Right ventricle myocardium inferior (tissue), 1 donor: ENCODE measurements at regions of chr1 and their contacts with region 1.

Region 1: DNA sequence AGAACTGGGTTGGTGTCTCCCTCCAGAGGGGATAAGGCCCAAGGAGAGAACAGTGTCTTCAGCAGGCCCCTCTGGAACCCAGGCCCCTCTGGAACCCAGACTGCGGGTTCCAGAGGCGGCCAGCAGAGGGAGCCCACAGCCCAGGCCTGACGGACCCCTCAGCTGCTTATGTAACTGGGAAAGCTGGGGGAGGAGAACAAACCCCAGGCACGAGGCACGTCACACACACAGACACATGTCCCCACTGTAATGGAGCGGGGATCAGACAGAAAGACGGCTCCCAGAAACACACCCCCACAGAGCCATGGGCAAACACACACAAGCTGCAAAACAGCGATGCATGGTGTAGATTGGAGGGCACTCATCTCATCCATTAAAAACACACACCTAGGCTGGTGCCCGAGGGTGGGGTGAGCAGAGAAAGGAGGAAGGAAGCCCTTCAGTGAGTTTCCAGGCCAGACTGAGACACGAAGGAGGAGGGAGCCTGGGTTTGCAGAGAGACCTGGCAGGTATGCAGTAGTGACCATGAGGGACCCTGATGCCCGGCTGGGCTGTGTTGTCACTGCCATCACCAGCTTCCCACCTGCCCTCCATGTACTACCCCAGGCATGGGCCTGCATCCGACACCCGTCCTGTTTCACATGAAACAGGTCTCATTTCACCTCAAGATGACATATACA is 2.8 kb upstream of the IGSF8 start:
- DNase-seq: peak; percentile 89
- ATAC-seq: peak; percentile 38

Region 2: GRCh38 chr1:160219062-160219929 is 118.1 kb after region 1 on chr1:
- intact Hi-C with region 1: loop called (anchors 2 kb)
- DNase-seq: no peak
- ATAC-seq: peak; percentile 84

Region 3: DNA sequence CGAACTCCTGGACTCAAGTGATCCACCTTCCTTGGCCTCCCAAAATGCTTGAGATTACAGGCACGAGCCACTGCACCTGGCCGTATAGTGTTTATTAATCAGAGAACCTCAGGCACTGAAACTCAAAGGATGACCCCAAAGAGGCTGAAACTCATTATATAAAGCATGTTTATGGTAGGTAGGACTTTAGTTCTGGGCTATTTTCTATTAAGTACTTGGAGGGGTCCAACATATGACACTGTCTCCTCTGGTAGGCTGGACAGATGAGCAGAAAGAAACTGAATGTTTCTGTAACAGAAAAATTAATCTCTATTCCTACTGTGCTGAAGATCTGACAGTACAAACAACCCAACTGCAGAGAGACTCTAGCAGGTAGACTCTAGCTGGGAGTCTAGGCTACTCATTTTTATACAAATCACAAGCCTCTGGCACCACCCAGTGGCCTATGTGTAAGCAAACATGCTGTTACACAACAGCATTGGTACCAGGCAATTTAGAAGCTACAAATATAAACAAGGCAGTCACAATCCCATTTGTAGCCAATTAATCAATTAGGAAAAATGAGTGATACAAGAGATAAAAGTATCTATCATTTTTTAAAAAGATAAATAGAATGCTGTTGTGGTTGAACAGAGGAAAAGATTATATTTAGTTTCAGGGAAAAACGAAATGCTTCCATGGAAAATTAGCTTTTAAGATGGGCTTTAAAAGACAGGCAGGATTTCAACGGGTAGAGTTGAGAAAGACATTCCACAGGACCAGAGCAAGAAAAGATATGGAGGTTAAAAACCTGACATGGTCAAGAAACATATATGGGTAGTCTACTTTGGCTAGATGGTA is 150.7 kb after region 1 on chr1:
- intact Hi-C with region 1: loop called (anchors 1 kb)
- DNase-seq: no peak
- ATAC-seq: peak; percentile 94

Region 4: DNA sequence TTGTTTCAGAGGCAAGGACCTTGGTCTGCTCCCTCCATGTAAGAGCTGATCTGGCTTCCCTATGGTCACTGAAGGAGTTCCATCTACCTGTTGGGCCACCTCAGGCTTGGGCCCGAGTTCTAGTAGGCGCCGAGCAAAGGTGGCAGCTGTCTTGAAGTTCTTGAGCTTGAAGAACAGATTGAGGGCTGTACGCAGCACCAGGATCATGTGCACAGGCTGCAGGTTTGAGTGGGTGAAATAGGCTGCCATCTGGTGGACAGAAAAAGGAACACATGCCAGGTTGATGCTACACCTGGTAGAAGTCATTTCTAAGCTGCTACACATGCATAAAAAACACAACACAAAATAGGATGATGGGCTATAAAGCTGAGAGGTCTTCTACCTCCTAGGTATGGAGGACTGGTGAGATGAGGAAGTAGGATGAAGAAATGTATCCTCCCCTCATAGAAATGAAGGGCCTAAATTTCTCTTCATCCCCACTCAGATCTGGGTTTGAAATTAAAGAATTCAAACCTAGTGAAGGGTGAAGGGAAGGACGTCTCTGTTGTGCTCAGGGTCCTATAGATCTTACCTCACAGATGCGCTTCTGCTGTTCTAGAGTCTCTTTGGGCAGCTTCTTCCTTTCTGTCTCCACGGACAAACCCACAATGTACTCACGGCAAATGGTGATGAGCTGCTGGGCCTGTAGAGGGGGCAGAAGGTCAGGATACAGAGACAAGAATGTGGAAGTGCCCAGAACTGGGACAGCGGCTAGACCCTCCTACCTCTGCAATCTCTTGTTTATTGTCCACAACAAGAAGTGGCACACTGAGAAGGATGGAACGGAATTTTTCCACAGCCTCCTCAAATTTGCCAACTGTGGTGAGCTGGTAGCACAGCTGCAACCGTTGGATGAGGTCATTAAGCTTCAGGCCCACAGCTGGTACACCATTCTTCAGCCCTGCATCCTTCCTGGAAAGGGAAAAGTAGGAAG is 190.4 kb after region 1 on chr1:
- intact Hi-C with region 1: loop called (anchors 2 kb)
- DNase-seq: no peak
- ATAC-seq: peak; percentile 85

Region 5: DNA sequence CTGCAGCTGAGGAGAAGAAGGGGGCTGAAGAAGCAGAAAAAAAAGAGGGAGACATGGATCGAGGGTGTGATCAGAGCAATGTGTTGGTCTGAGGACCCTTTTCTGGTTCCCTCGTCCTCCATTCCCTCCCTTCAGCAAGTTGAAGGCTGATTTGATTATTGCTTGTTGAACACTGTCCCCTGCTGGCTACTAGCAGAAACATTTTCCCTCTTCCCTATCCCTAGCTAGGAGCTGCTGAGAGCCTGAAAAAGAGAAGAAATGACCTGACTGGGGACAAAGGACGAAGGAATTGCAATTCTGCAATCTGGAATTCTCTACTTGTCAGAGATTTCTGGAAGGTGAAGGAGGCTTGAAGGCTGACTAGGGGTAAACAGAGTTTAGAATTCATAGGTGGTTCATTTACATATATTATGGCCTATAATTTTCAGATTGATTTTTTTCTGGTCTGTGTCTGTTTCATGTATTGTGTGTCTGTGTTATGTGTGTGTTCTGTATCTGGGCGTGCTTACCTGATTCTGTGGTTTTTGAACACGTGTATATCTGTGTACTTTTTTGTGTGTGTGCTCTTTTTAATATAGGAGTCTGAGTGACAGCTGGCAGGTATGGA is 275.5 kb after region 1 on chr1:
- intact Hi-C with region 1: loop called (anchors 5 kb)
- DNase-seq: no peak
- ATAC-seq: peak; percentile 81